Heart left ventricle (tissue), 16 donors: ENCODE measurements at regions of chr5 and their contacts with region 1.

Region 1: DNA sequence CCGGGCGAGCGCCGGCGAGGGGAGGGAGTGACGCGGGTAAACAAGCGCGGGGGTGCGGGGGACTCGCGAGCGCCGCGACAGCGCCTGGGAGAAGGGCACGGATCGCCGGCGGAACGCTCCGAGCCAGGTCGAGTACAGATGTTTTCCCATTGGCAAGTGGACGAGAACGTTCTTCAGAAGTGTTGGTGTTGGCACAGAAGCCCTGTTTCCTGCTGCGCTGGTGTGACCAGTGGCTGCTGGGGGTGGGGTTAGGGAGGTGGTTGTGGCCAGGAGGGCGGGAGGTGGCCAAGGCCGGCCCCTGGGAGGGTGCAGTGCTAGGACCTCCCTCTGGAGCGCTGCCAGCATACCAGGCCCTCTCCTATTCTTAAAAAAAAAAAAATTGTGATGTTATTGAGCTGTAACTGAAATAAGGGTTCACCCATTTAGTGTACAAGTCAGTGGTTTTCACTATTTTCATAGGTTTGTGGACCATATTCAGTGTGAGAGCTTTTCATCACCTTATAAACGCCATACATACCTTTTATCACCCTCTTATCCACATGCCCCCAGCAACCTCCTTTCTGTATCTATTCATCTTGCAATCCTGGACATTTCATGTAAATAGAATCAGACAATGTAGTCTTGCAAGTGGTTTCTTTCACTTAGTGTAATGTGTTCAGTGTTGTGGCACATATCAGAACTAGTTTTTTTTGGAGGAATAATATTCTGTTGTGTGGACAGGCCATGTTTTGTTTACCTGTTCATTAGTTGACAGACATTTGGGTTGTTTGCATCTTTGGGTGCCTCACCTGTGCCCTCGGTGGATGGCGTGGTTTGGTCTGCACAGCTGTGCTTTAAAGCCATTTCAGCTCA is 1.1 kb downstream of the SQSTM1 start:
- DNase-seq: peak; percentile 97 to 99 (median 98)
- ATAC-seq: peak; percentile 80 to 87 (median 83)
- H3K4me3 ChIP-seq: peak overlapping the region; percentile 67 to 100 (median 99)
- H3K27ac ChIP-seq: peak overlapping the region; percentile 98 to 100 (median 99)
- H3K4me1 ChIP-seq: peaks cover 24 to 83% (median 70%) of the 10 kb centered on the region in 12 donors
- H3K27me3 ChIP-seq: no peaks in the 10 kb centered on the region
- CTCF ChIP-seq: peak in 1 of 12 donors; percentile 12
- POLR2A ChIP-seq: peak in 1 of 2 donors; percentile 89

Region 2: GRCh38 chr5:179623003-179623880 is 198.6 kb before region 1 on chr5 and contains the start of gene HNRNPH1:
- intact Hi-C with region 1: loop called in 1 of 10 experiments (anchors 10 kb)
- DNase-seq: peak; percentile 98 to 99 (median 98)
- ATAC-seq: peak; percentile 87 to 93 (median 90)
- H3K4me3 ChIP-seq: peak within 1 kb of the TSS; percentile 66 to 100 (median 96)
- H3K27ac ChIP-seq: peak within 1 kb of the TSS; percentile 97 to 100 (median 100)
- H3K4me1 ChIP-seq: peaks cover 17 to 54% (median 46%) of the 10 kb centered on the region in 12 donors
- H3K27me3 ChIP-seq: no peaks in the 10 kb centered on the region
- CTCF ChIP-seq: peak in 4 of 12 donors; percentile 1 to 11 (median 4)
- POLR2A ChIP-seq: peak; percentile 78 to 99
- total RNA-seq, gene HNRNPH1: 106 to 252 (median 178) TPM

Region 3: DNA sequence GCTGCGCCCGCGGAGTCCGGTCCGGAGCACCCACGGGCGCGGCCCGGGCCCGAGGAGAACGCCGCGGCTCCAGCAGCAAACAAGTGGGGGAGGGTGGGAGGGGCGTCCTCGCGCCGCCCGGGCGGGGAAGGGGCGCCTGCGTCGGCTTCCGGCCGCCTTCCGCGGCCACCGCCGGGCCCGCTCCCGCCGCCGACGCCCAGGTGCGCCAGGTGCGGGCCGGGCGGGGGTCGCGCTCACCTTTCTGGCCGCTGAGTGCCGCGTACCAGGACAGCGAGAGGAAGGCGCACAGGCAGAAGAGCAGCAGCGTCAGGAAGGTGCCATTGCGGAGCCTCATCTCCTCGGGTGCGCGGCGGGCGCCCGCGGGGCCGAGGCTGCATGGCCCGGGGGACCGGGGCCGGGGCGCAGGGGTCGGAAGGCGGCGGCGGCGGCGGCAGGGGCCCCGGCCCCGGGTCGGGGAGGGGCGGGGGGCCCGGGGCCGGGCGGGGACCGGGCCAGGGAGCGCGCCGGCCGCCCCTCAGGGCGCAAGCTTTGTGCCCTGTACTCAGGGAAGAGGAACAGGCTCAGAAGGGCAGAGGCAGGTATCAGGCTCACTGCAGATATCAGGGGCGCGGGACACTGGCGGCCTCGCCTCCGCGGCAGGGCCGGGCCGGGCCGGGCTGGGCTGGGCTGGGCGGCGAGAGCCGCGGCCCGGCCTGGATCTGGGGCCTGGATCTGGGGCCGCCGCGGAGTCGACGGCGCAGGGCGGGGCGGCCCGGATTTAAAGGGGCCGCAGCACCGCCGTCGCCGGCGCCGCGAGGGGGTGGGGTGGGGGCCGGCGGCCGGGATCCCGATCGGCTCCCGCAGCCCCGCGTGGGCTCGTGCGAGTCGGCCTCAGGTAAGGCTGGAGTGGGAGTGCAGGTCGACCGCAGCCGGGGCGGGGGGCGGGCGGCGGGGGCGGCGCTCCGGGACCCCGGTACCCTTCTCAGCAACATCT is 15.3 kb before region 1 on chr5 and contains the start of gene MGAT4B:
- intact Hi-C with region 1: loop called in 2 of 10 experiments (anchors 2 kb)
- DNase-seq: peak; percentile 78 to 89 (median 86)
- ATAC-seq: peak; percentile 69 to 90 (median 88)
- H3K4me3 ChIP-seq: peak within 1 kb of the TSS; percentile 73 to 100 (median 96)
- H3K27ac ChIP-seq: peak within 1 kb of the TSS; percentile 89 to 98 (median 96)
- H3K4me1 ChIP-seq: peaks cover 0 to 50% (median 39%) of the 10 kb centered on the region in 12 donors
- H3K27me3 ChIP-seq: no peaks in the 10 kb centered on the region
- CTCF ChIP-seq: no peak
- POLR2A ChIP-seq: peak in 1 of 2 donors; percentile 47
- total RNA-seq, gene MGAT4B: 84.2 to 209 (median 112) TPM

Region 4: GRCh38 chr5:179858586-179859427 is 37.0 kb after region 1 on chr5 and contains the start of gene MRNIP:
- intact Hi-C with region 1: loop called in 5 of 10 experiments (anchors 1 to 5 kb)
- DNase-seq: peak; percentile 97 to 99 (median 98)
- ATAC-seq: peak; percentile 99 to 100 (median 99)
- H3K4me3 ChIP-seq: peak within 1 kb of the TSS; percentile 70 to 100 (median 87)
- H3K27ac ChIP-seq: peak within 1 kb of the TSS; percentile 84 to 97 (median 94)
- H3K4me1 ChIP-seq: peaks cover 0 to 27% (median 16%) of the 10 kb centered on the region in 12 donors
- H3K27me3 ChIP-seq: no peaks in the 10 kb centered on the region
- CTCF ChIP-seq: peak in 7 of 12 donors; percentile 7 to 52 (median 37)
- POLR2A ChIP-seq: peak in 1 of 2 donors; percentile 81
- total RNA-seq, gene MRNIP: 8.5 to 14.4 (median 12.3) TPM

Region 5: DNA sequence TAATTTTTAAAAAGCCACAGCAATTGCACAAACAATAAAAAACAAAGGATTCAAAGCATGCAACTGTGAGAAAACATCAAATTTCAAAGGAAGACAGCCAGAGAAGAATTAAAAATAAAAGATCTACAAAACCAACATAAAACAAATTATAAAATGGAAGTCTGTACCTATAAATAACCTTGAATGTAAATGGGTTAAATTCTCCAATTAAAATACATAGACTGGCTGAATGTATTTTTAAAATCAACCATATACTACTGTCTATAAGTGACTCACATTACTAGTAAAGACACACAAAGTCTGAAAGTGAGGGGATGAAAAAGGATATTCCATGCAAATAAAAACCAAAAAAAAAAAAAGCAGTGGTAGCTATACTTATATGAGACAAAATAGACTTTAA is 1110.9 kb after region 1 on chr5:
- intact Hi-C with region 1: no loop called
- DNase-seq: no peak
- ATAC-seq: no peak
- H3K4me3 ChIP-seq: no peak overlapping the region
- H3K27ac ChIP-seq: no peak overlapping the region
- H3K4me1 ChIP-seq: no peaks in the 10 kb centered on the region
- H3K27me3 ChIP-seq: no peaks in the 10 kb centered on the region
- CTCF ChIP-seq: no peak
- POLR2A ChIP-seq: no peak